H1 (cell line): ENCODE measurements at regions of chr16 and their contacts with region 1.

Region 1: GRCh38 chr16:67935402-67936123 is 1.1 kb downstream of the PSMB10 start:
- DNase-seq: peak; percentile 90 to 93
- H3K4me3 ChIP-seq: peak overlapping the region; percentile 69 to 98 (median 92)
- H3K27ac ChIP-seq: peak overlapping the region; percentile 74; the same call in 1 of the 2 replicates
- H3K4me1 ChIP-seq: peaks cover 0 to 15% (median 8%) of the 10 kb centered on the region in 4 experiments; a peak in 5 of 7 replicates
- H3K27me3 ChIP-seq: no peaks in the 10 kb centered on the region
- CTCF ChIP-seq: no peak
- EP300 ChIP-seq: no peak
- POLR2A ChIP-seq: peak; percentile 49 to 73
- RAD21 ChIP-seq: no peak

Region 2: DNA sequence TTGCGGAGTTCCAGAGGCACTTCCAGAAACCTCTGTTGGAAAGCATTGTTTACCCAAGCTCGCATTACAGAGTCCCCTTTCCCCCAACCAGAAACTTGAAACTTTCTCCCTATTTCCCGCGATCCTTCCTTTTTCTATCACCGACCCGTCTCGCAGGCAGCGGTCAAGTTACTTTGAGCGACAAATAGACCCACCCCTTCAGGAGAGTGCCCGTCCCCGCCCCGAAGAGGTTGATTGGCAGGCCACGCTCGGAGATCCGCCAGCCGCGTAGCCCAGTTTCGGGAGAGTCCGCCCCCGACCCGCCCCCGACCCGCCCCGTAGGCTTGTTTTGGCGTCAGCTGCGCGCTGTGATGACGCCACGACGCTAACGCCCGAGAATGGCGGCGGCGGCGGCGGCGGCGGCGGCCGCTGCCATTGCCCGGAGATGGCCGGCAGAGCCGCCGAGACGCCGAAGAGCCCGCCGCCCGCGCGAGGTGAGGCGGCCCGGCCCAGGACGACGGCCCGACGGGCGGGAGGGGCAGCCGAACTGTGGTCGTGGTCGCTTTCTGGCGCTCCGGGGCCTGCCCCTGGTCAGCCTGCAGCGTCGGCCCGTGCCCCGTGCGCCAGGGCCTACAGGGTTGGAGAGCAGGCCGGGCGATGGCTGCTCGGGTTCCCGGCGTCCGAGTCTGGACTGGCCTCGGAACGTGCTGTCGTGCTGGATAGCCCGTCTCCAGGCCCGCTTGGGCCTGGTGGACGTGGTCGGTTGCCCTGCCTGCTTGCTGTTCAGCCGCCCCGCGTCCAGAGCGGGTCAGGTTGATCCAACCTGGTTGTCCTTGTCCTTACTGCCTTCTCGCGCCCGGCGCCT is 42.4 kb before region 1 on chr16 and contains the start of gene PSKH1:
- CTCF ChIA-PET with region 1: interaction called, 623 read pairs
- POLR2A ChIA-PET with region 1: interaction called, 16 read pairs
- DNase-seq: peak; percentile 90 to 93
- H3K4me3 ChIP-seq: peak within 1 kb of the TSS; percentile 88 to 94 (median 94)
- H3K27ac ChIP-seq: peak within 1 kb of the TSS; percentile 87
- H3K4me1 ChIP-seq: peaks cover 0 to 10% (median 7%) of the 10 kb centered on the region in 4 experiments; a peak in 4 of 7 replicates
- H3K27me3 ChIP-seq: no peaks in the 10 kb centered on the region
- CTCF ChIP-seq: no peak
- EP300 ChIP-seq: 0 out of 3 replicates have a peak, but pooled peaks of 1 of the 2 experiments have one; percentile 43
- POLR2A ChIP-seq: peak; percentile 56 to 81
- RAD21 ChIP-seq: no peak
- total RNA-seq, gene PSKH1: 24.8 and 25.4 TPM in 2 replicates

Region 3: DNA sequence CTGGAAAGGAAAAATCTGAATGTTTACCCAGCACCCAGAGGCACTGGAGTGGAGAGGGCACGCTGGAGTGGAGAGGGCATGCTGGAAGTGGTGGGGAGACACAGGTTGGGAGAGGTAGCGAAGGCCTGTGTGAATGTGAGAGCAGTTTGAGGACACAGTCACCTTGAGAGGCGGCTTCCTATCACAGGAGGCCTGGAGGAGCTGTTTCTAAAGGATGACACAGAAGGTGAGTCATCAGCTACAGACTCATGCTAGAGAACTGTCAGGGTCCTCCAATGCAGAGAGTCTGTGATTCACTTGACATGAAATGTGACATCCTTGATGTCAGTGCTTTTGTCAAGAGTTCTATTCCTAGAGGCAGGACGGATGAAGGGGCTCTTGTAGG is 17.7 kb before region 1 on chr16:
- CTCF ChIA-PET with region 1: interaction called, 58 read pairs
- POLR2A ChIA-PET with region 1: interaction called, 9 read pairs
- DNase-seq: no peak
- H3K4me3 ChIP-seq: no peak overlapping the region
- H3K27ac ChIP-seq: no peak overlapping the region
- H3K4me1 ChIP-seq: peaks cover 0 to 10% (median 4%) of the 10 kb centered on the region in 4 experiments; a peak in 6 of 7 replicates
- H3K27me3 ChIP-seq: no peaks in the 10 kb centered on the region
- CTCF ChIP-seq: no peak
- EP300 ChIP-seq: no peak
- POLR2A ChIP-seq: no peak
- RAD21 ChIP-seq: no peak

Region 4: GRCh38 chr16:67951485-67951884 is 15.9 kb after region 1 on chr16:
- CTCF ChIA-PET with region 1: interaction called, 19 read pairs
- POLR2A ChIA-PET with region 1: interaction called, 47 read pairs
- DNase-seq: no peak
- H3K4me3 ChIP-seq: no peak overlapping the region
- H3K27ac ChIP-seq: no peak overlapping the region
- H3K4me1 ChIP-seq: no peaks in the 10 kb centered on the region
- H3K27me3 ChIP-seq: no peaks in the 10 kb centered on the region
- CTCF ChIP-seq: no peak
- EP300 ChIP-seq: no peak
- POLR2A ChIP-seq: no peak
- RAD21 ChIP-seq: no peak

Region 5: GRCh38 chr16:68013440-68013839 is 77.9 kb after region 1 on chr16:
- CTCF ChIA-PET with region 1: no interaction called
- POLR2A ChIA-PET with region 1: no interaction called
- DNase-seq: no peak
- H3K4me3 ChIP-seq: no peak overlapping the region
- H3K27ac ChIP-seq: no peak overlapping the region
- H3K4me1 ChIP-seq: peaks cover 0 to 6% (median 3%) of the 10 kb centered on the region in 4 experiments; a peak in 3 of 7 replicates
- H3K27me3 ChIP-seq: no peaks in the 10 kb centered on the region
- CTCF ChIP-seq: no peak
- EP300 ChIP-seq: no peak
- POLR2A ChIP-seq: no peak
- RAD21 ChIP-seq: no peak

Region 6: DNA sequence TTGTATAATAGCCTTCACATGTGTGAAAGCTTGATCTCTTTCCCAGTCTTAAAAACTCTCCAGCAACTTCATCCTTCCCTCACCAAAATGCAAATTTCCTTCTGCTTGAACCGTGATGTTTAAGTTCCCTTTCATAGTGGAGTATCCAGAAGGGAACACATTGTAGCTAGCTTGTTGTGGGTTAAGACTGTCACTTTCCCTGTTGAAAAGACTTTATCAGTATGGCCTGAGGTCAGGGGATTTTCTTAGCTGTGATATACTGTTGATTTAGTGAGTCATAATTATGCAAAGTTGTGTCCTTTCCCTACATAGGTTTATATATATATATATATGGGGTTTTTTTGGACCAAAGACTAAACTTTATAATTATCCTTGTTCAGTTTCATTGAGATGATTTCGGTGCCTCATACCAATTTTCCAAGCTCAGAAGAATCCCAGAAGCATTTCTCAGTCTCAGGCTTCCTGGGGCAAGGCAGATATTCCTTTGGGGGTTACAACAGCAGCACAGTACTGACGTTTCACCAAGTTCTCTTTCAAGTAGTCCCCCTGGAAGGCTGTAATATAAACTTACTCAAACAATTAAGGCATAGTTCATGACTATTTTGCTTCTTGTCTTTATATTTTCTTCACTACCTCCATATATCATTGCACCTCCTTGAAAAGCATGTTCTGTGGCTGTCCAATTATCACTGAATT is 264.7 kb after region 1 on chr16:
- CTCF ChIA-PET with region 1: no interaction called
- POLR2A ChIA-PET with region 1: no interaction called
- DNase-seq: no peak
- H3K4me3 ChIP-seq: no peak overlapping the region
- H3K27ac ChIP-seq: no peak overlapping the region
- H3K4me1 ChIP-seq: no peaks in the 10 kb centered on the region
- H3K27me3 ChIP-seq: no peaks in the 10 kb centered on the region
- CTCF ChIP-seq: no peak
- EP300 ChIP-seq: no peak
- POLR2A ChIP-seq: no peak
- RAD21 ChIP-seq: no peak